ENCODE measurements at regions of chr15 and their contacts with region 1.

Region 1: GRCh38 chr15:57496946-57497869 is 94.5 kb upstream of the MYZAP start:
- DNase-seq: peak; percentile 78 to 92
- H3K4me3 ChIP-seq: no peak overlapping the region
- H3K4me3 Mint-ChIP-seq: peak overlapping the region; percentile 18
- H3K27ac Mint-ChIP-seq: peak overlapping the region; percentile 80
- H3K4me1 ChIP-seq: peaks cover 48% of the 10 kb centered on the region
- H3K4me1 Mint-ChIP-seq: peaks cover 42% of the 10 kb centered on the region
- H3K27me3 ChIP-seq: no peaks in the 10 kb centered on the region
- H3K27me3 Mint-ChIP-seq: no peaks in the 10 kb centered on the region
- CTCF ChIP-seq: no peak

Region 2: GRCh38 chr15:57284535-57284934 is 212.7 kb before region 1 on chr15:
- CTCF ChIA-PET with region 1: no interaction called
- POLR2A ChIA-PET with region 1: no interaction called
- intact Hi-C with region 1: no loop called
- DNase-seq: no peak
- H3K4me3 ChIP-seq: no peak overlapping the region
- H3K4me3 Mint-ChIP-seq: no peak overlapping the region
- H3K27ac Mint-ChIP-seq: no peak overlapping the region
- H3K4me1 ChIP-seq: no peaks in the 10 kb centered on the region
- H3K4me1 Mint-ChIP-seq: no peaks in the 10 kb centered on the region
- H3K27me3 ChIP-seq: no peaks in the 10 kb centered on the region
- H3K27me3 Mint-ChIP-seq: no peaks in the 10 kb centered on the region
- CTCF ChIP-seq: no peak

Region 3: DNA sequence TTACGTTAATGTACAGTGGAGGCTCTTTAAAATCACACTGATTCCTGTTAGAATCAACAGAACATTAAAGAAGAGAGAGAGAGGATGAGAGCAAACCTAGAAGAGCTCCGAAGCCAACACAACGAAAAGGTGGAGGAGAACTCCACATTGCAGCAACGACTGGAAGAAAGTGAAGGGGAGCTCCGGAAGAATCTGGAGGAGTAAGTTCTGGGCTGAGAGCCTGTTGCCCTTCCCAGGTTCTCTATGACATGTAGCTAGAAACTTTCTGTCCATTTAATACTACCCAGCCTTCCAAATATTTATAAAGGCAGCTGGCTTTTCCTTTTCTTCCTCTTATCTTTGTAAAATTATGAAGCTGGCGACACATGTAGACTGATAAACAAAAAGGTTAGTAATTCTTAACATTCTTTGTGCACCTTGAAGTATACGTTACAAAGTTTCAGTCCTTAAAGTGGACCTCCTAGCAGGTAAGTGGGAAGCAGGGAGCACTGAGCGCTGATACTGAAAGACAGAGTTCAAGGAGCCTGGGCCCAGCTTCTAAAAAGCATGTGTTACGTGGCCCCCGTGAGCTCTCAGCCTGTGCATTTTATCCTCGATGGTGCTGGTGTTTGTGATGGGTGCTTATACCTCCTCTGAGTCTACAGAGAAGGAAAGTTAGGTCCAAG is 45.0 kb before region 1 on chr15:
- CTCF ChIA-PET with region 1: no interaction called
- POLR2A ChIA-PET with region 1: no interaction called
- intact Hi-C with region 1: no loop called
- DNase-seq: no peak
- H3K4me3 ChIP-seq: no peak overlapping the region
- H3K4me3 Mint-ChIP-seq: no peak overlapping the region
- H3K27ac Mint-ChIP-seq: no peak overlapping the region
- H3K4me1 ChIP-seq: peaks cover 10% of the 10 kb centered on the region; the same call in 1 of the 2 replicates
- H3K4me1 Mint-ChIP-seq: peaks cover 21% of the 10 kb centered on the region
- H3K27me3 ChIP-seq: no peaks in the 10 kb centered on the region
- H3K27me3 Mint-ChIP-seq: no peaks in the 10 kb centered on the region
- CTCF ChIP-seq: no peak

Region 4: GRCh38 chr15:57462381-57462780 is 34.8 kb before region 1 on chr15:
- CTCF ChIA-PET with region 1: no interaction called
- POLR2A ChIA-PET with region 1: no interaction called
- intact Hi-C with region 1: no loop called
- DNase-seq: no peak
- H3K4me3 ChIP-seq: no peak overlapping the region
- H3K4me3 Mint-ChIP-seq: no peak overlapping the region
- H3K27ac Mint-ChIP-seq: no peak overlapping the region
- H3K4me1 ChIP-seq: no peaks in the 10 kb centered on the region
- H3K4me1 Mint-ChIP-seq: no peaks in the 10 kb centered on the region
- H3K27me3 ChIP-seq: no peaks in the 10 kb centered on the region
- H3K27me3 Mint-ChIP-seq: no peaks in the 10 kb centered on the region
- CTCF ChIP-seq: no peak

Region 5: GRCh38 chr15:57476533-57476975 is 20.7 kb before region 1 on chr15:
- CTCF ChIA-PET with region 1: no interaction called
- POLR2A ChIA-PET with region 1: no interaction called
- intact Hi-C with region 1: loop called (anchors 1 kb)
- DNase-seq: no peak
- H3K4me3 ChIP-seq: no peak overlapping the region
- H3K4me3 Mint-ChIP-seq: no peak overlapping the region
- H3K27ac Mint-ChIP-seq: no peak overlapping the region
- H3K4me1 ChIP-seq: peaks cover 28% of the 10 kb centered on the region
- H3K4me1 Mint-ChIP-seq: peaks cover 29% of the 10 kb centered on the region
- H3K27me3 ChIP-seq: no peaks in the 10 kb centered on the region
- H3K27me3 Mint-ChIP-seq: no peaks in the 10 kb centered on the region
- CTCF ChIP-seq: no peak